ENCODE measurements at regions of chr11 and their contacts with region 1.

Region 1: GRCh38 chr11:106765469-106766258 is 252.6 kb downstream of the GUCY1A2 start:
- DNase-seq: no peak
- ATAC-seq: no peak
- H3K4me3 ChIP-seq: no peak overlapping the region
- H3K4me3 Mint-ChIP-seq: no peak overlapping the region
- H3K27ac ChIP-seq: no peak overlapping the region
- H3K27ac Mint-ChIP-seq: no peak overlapping the region
- H3K4me1 ChIP-seq: no peaks in the 10 kb centered on the region
- H3K4me1 Mint-ChIP-seq: no peaks in the 10 kb centered on the region
- H3K27me3 ChIP-seq: no peaks in the 10 kb centered on the region
- H3K27me3 Mint-ChIP-seq: no peaks in the 10 kb centered on the region

Region 2: GRCh38 chr11:106043540-106043939 is 722.1 kb before region 1 on chr11:
- CTCF ChIA-PET with region 1: no interaction called
- POLR2A ChIA-PET with region 1: no interaction called
- DNase-seq: no peak
- ATAC-seq: no peak
- H3K4me3 ChIP-seq: no peak overlapping the region
- H3K4me3 Mint-ChIP-seq: no peak overlapping the region
- H3K27ac ChIP-seq: no peak overlapping the region
- H3K27ac Mint-ChIP-seq: no peak overlapping the region
- H3K4me1 ChIP-seq: no peaks in the 10 kb centered on the region
- H3K4me1 Mint-ChIP-seq: no peaks in the 10 kb centered on the region
- H3K27me3 ChIP-seq: peaks cover 0 to 5% of the 10 kb centered on the region in 2 experiments
- H3K27me3 Mint-ChIP-seq: peaks cover 19 to 23% of the 10 kb centered on the region in 2 donors

Region 3: DNA sequence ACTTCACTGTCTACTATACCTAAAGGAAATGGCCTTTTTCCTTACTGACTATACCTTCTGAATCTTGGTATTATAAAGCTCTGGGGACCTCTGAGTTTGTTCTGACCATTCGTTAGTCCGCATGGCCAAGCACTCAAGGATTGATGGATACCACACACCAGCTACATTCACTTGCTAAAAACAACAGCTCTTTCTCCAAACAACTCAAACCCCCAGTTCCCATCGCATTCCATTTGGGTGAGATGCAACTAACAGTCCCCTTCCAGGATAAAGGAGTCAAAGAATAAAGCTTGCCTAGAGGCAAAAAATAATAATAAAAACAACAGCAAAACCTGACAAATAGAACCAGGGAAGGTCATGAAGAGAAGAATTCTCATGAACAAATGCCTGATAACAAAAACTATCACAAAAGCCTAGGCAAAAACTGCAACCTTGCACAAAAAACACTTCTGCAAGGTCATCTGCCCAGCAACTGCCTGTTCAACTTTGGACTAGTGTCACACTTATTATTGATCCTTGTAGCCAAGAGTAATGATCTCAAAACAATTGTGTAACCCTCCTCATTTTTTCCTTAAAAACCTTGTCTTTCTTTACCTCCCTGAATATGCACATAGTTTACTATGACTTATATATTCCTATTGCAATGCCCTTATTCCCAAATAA is 391.6 kb after region 1 on chr11:
- CTCF ChIA-PET with region 1: no interaction called
- POLR2A ChIA-PET with region 1: interaction called in 1 of 2 experiments, 16 read pairs
- DNase-seq: no peak
- ATAC-seq: no peak
- H3K4me3 ChIP-seq: no peak overlapping the region
- H3K4me3 Mint-ChIP-seq: no peak overlapping the region
- H3K27ac ChIP-seq: no peak overlapping the region
- H3K27ac Mint-ChIP-seq: no peak overlapping the region
- H3K4me1 ChIP-seq: no peaks in the 10 kb centered on the region
- H3K4me1 Mint-ChIP-seq: no peaks in the 10 kb centered on the region
- H3K27me3 ChIP-seq: no peaks in the 10 kb centered on the region
- H3K27me3 Mint-ChIP-seq: no peaks in the 10 kb centered on the region